GM12878 (cell line): ENCODE measurements at regions of chrX and their contacts with region 1.

Region 1: DNA sequence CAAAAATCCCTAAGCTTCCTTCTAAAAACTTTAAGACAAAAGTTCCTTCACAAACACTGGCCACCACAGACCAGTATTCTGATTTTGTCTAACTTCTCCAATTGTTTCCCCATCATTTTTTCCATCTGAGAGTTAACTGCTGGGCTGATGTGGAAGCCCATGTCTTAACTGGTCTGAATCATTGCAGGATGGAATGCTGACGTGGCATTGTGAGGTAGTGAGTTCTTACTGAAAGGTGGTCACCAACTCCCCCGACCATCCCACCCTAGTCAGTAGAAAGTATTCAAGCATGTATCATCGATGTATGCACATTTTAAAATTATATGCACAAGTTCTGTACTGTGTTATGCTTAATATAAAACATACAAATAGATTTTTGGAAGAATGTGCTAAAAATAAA is 99.1 kb upstream of the SMIM10 start:
- DNase-seq: no peak
- ATAC-seq: no peak
- H3K4me3 ChIP-seq: no peak overlapping the region
- H3K27ac ChIP-seq: no peak overlapping the region
- H3K4me1 ChIP-seq: no peaks in the 10 kb centered on the region
- H3K27me3 ChIP-seq: no peaks in the 10 kb centered on the region
- CTCF ChIP-seq: no peak
- EP300 ChIP-seq: no peak
- POLR2A ChIP-seq: no peak
- RAD21 ChIP-seq: no peak

Region 2: GRCh38 chrX:134718105-134718965 is 173.3 kb before region 1 on chrX:
- CTCF ChIA-PET with region 1: no interaction called
- POLR2A ChIA-PET with region 1: no interaction called
- RAD21 ChIA-PET with region 1: no interaction called
- SMC1A ChIA-PET with region 1: no interaction called
- in situ Hi-C with region 1: no loop called
- intact Hi-C with region 1: no loop called
- DNase-seq: no peak
- ATAC-seq: peak; percentile 61
- H3K4me3 ChIP-seq: no peak overlapping the region
- H3K27ac ChIP-seq: 0 out of 2 replicates have a peak overlapping the region, but pooled peaks have one; percentile 7
- H3K4me1 ChIP-seq: 0 out of 2 replicates have a peak, but pooled peaks cover 5% of the 10 kb centered on the region
- H3K27me3 ChIP-seq: no peaks in the 10 kb centered on the region
- CTCF ChIP-seq: no peak
- EP300 ChIP-seq: no peak
- POLR2A ChIP-seq: no peak
- RAD21 ChIP-seq: no peak

Region 3: DNA sequence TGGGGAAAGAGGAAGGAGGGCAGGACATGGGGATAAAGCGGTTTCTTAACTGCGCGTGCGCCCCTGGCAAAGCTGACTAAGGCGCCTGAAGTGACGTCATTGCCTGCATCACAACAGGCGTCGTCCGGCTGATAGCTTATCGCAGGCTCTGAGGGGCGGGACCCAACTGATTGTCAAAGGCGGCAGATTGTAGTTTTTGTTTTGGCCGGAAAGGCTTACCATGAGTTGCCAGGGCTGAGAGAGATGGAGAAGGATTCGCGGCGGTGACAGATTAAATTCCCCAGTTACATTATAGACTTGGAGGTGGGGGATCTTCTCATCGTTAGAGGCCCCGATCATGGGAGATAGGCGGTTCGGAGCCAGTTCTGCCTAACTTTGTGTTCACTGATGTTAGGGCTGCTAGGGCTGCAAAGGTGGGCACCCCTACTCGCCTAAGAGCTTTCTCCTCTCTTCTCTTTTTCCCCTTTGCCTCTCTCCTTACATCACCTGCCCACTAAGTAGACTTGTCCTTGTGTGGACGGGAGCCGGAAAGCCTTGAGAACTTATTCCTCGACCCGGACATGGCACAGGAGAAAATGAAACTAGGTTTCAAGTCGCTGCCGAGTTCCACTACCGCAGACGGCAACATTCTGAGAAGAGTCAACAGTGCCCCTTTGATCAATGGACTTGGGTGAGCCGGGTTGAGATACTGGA is 84.5 kb before region 1 on chrX:
- CTCF ChIA-PET with region 1: no interaction called
- POLR2A ChIA-PET with region 1: no interaction called
- RAD21 ChIA-PET with region 1: no interaction called
- SMC1A ChIA-PET with region 1: no interaction called
- in situ Hi-C with region 1: no loop called
- intact Hi-C with region 1: no loop called
- DNase-seq: peak; percentile 65
- ATAC-seq: peak; percentile 94
- H3K4me3 ChIP-seq: peak overlapping the region; percentile 58
- H3K27ac ChIP-seq: peak overlapping the region; percentile 62
- H3K4me1 ChIP-seq: no peaks in the 10 kb centered on the region
- H3K27me3 ChIP-seq: no peaks in the 10 kb centered on the region
- CTCF ChIP-seq: no peak
- EP300 ChIP-seq: 0 out of 4 replicates have a peak, but pooled peaks of 1 of the 2 experiments have one; percentile 26
- POLR2A ChIP-seq: peak; percentile 59
- RAD21 ChIP-seq: no peak

Region 4: GRCh38 chrX:134821370-134821769 is 70.3 kb before region 1 on chrX:
- CTCF ChIA-PET with region 1: no interaction called
- POLR2A ChIA-PET with region 1: interaction called, 13 read pairs
- RAD21 ChIA-PET with region 1: no interaction called
- SMC1A ChIA-PET with region 1: no interaction called
- in situ Hi-C with region 1: no loop called
- intact Hi-C with region 1: no loop called
- DNase-seq: no peak
- ATAC-seq: no peak
- H3K4me3 ChIP-seq: no peak overlapping the region
- H3K27ac ChIP-seq: no peak overlapping the region
- H3K4me1 ChIP-seq: no peaks in the 10 kb centered on the region
- H3K27me3 ChIP-seq: no peaks in the 10 kb centered on the region
- CTCF ChIP-seq: no peak
- EP300 ChIP-seq: no peak
- POLR2A ChIP-seq: no peak
- RAD21 ChIP-seq: no peak

Region 5: DNA sequence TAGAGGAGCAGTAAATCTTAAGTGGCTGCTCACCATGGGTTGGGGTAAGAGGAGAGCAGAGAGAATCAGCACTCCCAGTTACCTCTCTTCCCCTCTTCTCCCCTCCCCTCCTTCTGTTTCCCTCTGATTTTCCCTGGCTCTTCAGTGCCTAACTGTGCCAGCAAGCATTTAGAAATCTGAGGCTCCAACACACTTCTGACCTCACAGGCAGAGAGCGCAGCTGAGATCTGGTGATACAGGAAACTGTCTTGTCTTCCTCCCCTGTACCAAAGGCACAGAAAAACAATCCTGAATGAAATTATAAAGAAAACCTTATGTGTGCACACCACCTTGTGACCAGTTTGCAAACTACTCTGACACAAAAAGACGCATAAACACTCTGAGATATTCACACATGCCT is 16.7 kb after region 1 on chrX:
- CTCF ChIA-PET with region 1: no interaction called
- POLR2A ChIA-PET with region 1: no interaction called
- RAD21 ChIA-PET with region 1: no interaction called
- SMC1A ChIA-PET with region 1: no interaction called
- in situ Hi-C with region 1: no loop called
- intact Hi-C with region 1: no loop called
- DNase-seq: no peak
- ATAC-seq: peak; percentile 49
- H3K4me3 ChIP-seq: no peak overlapping the region
- H3K27ac ChIP-seq: no peak overlapping the region
- H3K4me1 ChIP-seq: no peaks in the 10 kb centered on the region
- H3K27me3 ChIP-seq: no peaks in the 10 kb centered on the region
- CTCF ChIP-seq: peak in 2 of 3 experiments; percentile 9 to 34; a peak in 1 of 6 replicates
- EP300 ChIP-seq: no peak
- POLR2A ChIP-seq: no peak
- RAD21 ChIP-seq: peak; percentile 44